BJ (cell line): ENCODE measurements at regions of chr9 and their contacts with region 1.

Region 1: GRCh38 chr9:12813960-12814876 is 39.4 kb downstream of the LURAP1L start:
- DNase-seq: peak; percentile 98
- H3K4me3 ChIP-seq: no peak overlapping the region
- H3K27me3 ChIP-seq: no peaks in the 10 kb centered on the region
- CTCF ChIP-seq: peak; percentile 60

Region 2: DNA sequence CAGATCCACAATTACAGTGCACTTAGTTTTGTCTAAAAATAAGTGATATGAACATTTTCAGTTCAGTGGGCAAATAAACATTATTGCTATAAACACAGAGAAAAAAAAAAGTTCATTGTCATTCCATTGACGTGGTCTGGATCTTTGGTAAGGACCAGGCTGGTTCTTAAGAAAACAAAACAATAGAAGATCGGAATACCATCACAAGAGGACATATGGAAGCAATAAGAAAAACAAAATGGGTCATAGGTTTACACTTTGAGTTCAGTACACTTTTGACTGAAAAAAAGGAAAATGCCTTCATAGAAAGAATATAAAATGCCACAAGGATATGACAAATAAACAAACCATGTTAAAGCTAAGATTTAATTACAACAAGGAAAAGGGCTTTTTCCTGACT is 410.5 kb before region 1 on chr9:
- CTCF ChIA-PET with region 1: no interaction called
- POLR2A ChIA-PET with region 1: no interaction called
- DNase-seq: no peak
- H3K4me3 ChIP-seq: no peak overlapping the region
- H3K27me3 ChIP-seq: no peaks in the 10 kb centered on the region
- CTCF ChIP-seq: no peak

Region 3: GRCh38 chr9:12775679-12776512 is 38.3 kb before region 1 on chr9:
- CTCF ChIA-PET with region 1: interaction called, 16 read pairs
- POLR2A ChIA-PET with region 1: no interaction called
- DNase-seq: no peak
- H3K4me3 ChIP-seq: peak overlapping the region; percentile 60
- H3K27me3 ChIP-seq: no peaks in the 10 kb centered on the region
- CTCF ChIP-seq: peak; percentile 57

Region 4: DNA sequence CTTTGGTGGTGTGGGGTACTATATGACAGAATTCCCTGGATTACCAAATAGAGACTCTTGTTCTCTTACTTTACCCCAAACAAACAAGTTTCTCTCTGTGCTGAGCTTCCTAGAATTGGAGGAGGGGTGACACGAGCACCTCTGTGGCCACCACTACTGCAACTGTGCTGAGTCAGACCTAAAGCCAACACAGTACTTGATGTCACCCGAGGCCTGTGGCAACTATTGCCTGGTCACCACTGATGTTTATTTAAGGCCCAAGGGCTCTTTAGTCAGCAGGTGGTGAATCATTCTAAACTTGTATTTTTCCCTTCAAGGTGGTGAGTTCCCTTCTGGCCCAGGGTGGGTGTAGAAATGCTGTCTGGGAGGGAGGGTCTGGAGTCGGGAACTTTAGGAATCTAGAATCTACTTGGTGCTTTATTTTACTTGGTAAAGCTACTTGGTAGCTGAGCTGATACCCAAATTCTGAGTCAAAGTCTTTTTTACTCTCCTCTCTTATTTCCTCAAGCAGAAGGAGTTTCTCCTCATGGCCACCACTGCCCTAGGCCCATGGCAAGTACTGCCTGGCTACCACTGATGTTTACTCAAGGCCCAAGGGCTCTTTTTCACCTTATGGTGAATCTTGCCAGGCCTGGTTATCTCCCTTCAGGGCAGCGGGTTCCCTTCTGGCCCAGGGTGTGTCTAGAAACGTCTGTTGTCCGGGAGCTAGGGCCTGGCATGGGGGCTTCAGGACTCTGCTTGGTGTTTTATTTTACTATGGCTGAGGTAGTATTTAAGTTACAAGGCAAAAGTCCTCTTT is 29.6 kb before region 1 on chr9:
- CTCF ChIA-PET with region 1: no interaction called
- POLR2A ChIA-PET with region 1: interaction called, 21 read pairs
- DNase-seq: peak; percentile 82
- H3K4me3 ChIP-seq: no peak overlapping the region
- H3K27me3 ChIP-seq: no peaks in the 10 kb centered on the region
- CTCF ChIP-seq: no peak